K562 (cell line): ENCODE measurements at regions of chr11 and their contacts with region 1.

Region 1: DNA sequence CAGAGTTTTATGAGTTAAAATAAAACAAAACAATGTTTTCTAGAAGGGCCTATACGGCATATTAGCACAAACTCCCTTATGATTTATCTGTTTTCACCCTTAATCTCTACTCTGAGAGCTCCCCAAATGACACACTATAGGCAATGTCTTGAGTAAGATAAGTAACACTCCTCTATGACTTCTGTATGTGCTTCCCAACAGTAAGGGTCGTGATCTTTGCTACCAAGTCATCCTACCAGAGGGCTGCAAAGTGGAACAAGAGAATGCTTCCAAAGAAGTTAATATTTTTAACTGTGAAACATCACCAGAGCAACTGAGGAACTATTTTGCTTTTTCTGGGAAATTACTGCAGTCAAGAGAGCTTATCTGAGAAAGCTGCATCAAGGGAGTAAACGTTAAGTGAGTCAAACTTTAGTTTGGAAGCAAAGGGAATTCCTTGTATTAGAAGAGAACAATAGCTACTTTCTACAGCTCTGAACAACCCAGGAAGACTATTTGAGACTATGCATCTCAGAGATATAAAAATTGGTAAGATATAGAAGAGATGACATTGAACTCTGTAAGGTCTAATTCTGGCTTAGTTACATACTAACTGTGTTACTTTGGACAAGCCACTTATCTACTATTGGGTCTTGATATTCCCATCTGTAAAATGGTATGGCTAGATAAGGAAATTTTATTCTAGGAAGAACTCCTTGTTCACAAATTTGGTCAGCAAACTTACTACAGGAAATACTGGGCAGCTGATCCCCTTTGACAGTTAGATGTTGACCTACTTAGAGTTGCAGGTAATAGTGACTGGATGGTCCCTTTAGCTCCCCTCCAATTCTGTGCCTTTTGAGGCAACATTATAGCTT is 43.7 kb upstream of the CCDC34 start:
- DNase-seq: peak in 2 of 4 experiments; percentile 39 to 70
- ATAC-seq: peak; percentile 77
- H3K4me3 ChIP-seq: no peak overlapping the region
- H3K27ac ChIP-seq: peak overlapping the region; percentile 20; the same call in 2 of the 3 replicates
- H3K4me1 ChIP-seq: peaks cover 5 to 31% of the 10 kb centered on the region in 2 experiments; a peak in 4 of 5 replicates
- H3K27me3 ChIP-seq: no peaks in the 10 kb centered on the region
- CTCF ChIP-seq: no peak
- EP300 ChIP-seq: no peak
- POLR2A ChIP-seq: no peak
- RAD21 ChIP-seq: no peak; a peak in 1 of 4 replicates

Region 2: DNA sequence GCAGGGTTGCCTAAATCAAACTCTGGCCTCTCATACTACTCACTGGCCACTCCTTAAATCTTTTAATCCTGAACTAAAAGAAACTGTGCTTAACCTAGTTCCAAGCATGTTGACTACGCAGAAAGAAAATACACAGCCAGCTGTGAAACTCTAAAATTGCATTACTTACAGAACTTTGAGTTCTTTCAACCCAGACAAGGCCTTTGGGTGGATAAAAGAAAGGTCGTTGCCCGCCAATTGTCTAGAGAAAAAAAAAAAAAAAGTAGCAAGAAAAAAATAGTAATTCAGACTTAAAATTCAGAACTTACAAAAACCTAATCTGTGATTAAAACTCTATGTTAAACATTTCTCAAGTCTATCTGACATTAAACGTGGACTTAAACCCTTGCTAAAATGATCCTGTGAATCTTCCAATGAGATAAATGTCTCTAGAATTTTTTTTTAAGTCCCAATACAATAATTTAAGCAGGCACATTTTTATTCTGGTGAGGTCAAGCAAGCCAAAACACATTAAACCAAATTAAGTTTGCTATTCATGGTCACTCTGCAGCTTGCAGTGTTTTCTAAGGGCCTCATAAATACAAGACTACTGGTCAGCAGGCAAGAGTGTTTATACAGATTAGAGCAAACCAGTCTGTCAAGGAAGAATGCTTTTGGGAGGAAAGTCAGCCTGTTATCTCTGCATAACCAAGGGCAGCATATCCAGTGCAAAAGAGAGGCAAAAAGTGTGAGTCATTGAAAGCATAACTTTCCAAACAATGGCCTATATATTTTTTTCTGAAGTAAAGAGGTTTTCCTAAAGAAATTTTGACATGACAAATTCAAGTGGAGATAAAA is 14.2 kb before region 1 on chr11:
- CTCF ChIA-PET with region 1: no interaction called
- POLR2A ChIA-PET with region 1: interaction called, 9 read pairs
- in situ Hi-C with region 1: no loop called
- intact Hi-C with region 1: loop called (anchors 2 kb)
- DNase-seq: peak; percentile 28 to 89 (median 54)
- ATAC-seq: peak; percentile 89
- H3K4me3 ChIP-seq: no peak overlapping the region
- H3K27ac ChIP-seq: peak overlapping the region; percentile 40; the same call in 1 of the 3 replicates
- H3K4me1 ChIP-seq: peaks cover 5 to 51% of the 10 kb centered on the region in 2 experiments
- H3K27me3 ChIP-seq: no peaks in the 10 kb centered on the region
- CTCF ChIP-seq: no peak
- EP300 ChIP-seq: peak; percentile 90
- POLR2A ChIP-seq: no peak
- RAD21 ChIP-seq: no peak

Region 3: GRCh38 chr11:27468209-27468994 is 61.7 kb after region 1 on chr11:
- CTCF ChIA-PET with region 1: no interaction called
- POLR2A ChIA-PET with region 1: no interaction called
- in situ Hi-C with region 1: no loop called
- intact Hi-C with region 1: no loop called
- DNase-seq: no peak
- ATAC-seq: no peak
- H3K4me3 ChIP-seq: no peak overlapping the region
- H3K27ac ChIP-seq: no peak overlapping the region
- H3K4me1 ChIP-seq: peaks cover 19 to 20% of the 10 kb centered on the region in 2 experiments; a peak in 4 of 5 replicates
- H3K27me3 ChIP-seq: no peaks in the 10 kb centered on the region
- CTCF ChIP-seq: no peak
- EP300 ChIP-seq: no peak
- POLR2A ChIP-seq: no peak
- RAD21 ChIP-seq: no peak

Region 4: GRCh38 chr11:27497284-27497866 is 90.6 kb after region 1 on chr11:
- CTCF ChIA-PET with region 1: no interaction called
- POLR2A ChIA-PET with region 1: no interaction called
- in situ Hi-C with region 1: no loop called
- intact Hi-C with region 1: no loop called
- DNase-seq: peak in 3 of 4 experiments; percentile 20 to 30 (median 21)
- ATAC-seq: peak; percentile 73
- H3K4me3 ChIP-seq: no peak overlapping the region
- H3K27ac ChIP-seq: no peak overlapping the region
- H3K4me1 ChIP-seq: no peaks in the 10 kb centered on the region
- H3K27me3 ChIP-seq: no peaks in the 10 kb centered on the region
- CTCF ChIP-seq: peak in 2 of 3 experiments; percentile 20 to 60; a peak in 3 of 6 replicates
- EP300 ChIP-seq: no peak
- POLR2A ChIP-seq: no peak
- RAD21 ChIP-seq: peak; percentile 41 to 55